Left colon (tissue), 2 donors: ENCODE measurements at regions of chr1 and their contacts with region 1.

Region 1: GRCh38 chr1:109277434-109278204 is 5.3 kb downstream of the PSRC1 start:
- DNase-seq: peak; percentile 88 to 91
- ATAC-seq: peak; percentile 89

Region 2: GRCh38 chr1:109397538-109398342 is 120.1 kb after region 1 on chr1 and contains the start of gene SORT1:
- intact Hi-C with region 1: loop called (anchors 5 kb)
- DNase-seq: peak; percentile 81 to 89
- ATAC-seq: peak; percentile 85
- total RNA-seq, gene SORT1: 123 to 124 TPM

Region 3: DNA sequence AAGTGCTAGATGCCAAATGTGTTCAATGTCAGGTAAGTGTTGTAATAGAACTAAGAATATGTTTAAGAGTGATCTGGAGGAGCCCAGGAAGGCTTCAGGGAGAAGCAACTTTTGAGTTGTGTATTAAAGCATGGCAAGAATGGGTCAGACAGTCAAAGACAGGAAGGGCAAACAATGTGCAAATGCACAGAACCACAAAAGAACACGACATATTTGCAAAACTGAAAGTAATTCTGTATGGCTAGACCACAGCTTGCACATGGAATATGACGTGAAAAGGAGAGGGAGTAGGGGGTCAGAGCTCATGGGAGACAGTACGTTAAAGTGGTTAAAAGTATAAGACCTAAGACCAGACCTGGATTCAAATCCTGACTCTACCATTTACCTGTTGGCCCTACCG is 127.2 kb after region 1 on chr1:
- intact Hi-C with region 1: loop called in 1 of 2 experiments (anchors 5 kb)
- DNase-seq: no peak
- ATAC-seq: no peak